Endothelial cell of umbilical vein (primary cell): ENCODE measurements at regions of chr18 and their contacts with region 1.

Region 1: DNA sequence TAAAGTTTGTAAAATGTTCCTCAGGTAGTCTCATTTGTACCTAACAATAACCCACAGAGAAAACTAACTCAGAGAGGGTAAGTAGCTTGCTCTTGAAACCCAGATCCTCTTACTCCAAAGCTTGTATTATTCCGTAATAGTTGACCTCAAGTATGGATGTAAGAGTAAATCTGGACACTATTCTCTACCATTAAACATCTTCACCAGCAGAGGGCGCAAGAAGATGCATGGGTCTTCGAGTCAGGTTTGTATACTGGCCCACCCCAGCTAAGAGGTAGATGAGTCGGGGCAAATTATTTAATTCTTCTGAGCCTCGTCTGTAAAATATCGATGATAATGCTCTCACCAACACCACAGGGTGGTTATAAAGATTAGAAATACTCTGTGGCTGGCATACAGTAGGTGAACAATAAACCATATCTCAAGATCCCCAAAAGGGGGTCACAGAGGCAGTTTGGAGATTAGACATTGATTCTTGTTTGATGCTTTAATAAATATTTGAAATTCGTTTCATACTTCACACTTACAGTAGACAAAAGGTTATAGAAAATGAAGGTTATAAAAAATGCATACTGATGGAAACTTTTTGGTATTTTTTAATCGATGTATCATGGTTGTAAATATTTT is 3.5 kb upstream of the CABLES1 start:
- DNase-seq: peak; percentile 81
- H3K4me3 ChIP-seq: no peak overlapping the region
- H3K27ac ChIP-seq: no peak overlapping the region
- H3K4me1 ChIP-seq: peaks cover 25% of the 10 kb centered on the region
- H3K27me3 ChIP-seq: no peaks in the 10 kb centered on the region
- CTCF ChIP-seq: peak; percentile 62 to 71
- POLR2A ChIP-seq: no peak

Region 2: DNA sequence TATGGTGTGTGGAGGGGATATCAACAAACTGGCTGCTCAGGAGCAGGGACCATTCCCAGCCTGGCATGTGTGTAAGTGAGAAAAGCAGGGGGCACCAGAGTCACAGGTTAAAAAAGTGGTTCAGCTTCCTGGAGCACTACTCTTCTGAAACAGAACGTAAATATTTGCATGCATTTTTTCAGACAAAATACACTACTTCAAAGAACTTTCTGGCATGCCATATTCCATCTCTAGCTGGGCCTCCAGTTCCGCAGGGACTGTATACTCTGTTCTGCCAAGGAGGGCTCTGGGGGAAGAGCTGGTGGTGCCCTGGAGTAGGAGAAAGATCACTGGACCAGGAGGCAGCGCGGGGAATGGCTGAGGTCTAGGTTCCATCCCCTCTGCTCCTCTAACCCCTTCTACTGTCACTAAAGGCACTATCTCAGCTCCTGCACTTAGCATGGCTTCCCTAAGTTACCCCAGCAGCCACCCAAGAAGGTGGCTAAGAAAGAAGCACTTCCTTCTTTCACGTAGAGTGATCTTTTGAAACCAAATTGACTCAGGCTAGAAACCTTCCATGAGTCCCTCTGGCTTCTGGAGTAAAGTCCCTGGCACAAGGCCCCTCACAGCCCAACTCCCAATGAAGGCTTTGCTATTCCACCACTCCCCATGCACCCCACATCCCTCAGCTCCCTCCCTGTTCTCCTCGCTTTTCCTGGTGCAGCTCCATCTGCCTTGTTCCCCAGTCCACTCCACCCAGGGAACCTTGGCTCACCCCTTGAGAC is 54.1 kb before region 1 on chr18:
- CTCF ChIA-PET with region 1: interaction called, 14 read pairs
- POLR2A ChIA-PET with region 1: no interaction called
- dilution Hi-C with region 1: no loop called
- intact Hi-C with region 1: loop called (anchors 2 kb)
- DNase-seq: peak; percentile 24
- H3K4me3 ChIP-seq: no peak overlapping the region
- H3K27ac ChIP-seq: no peak overlapping the region
- H3K4me1 ChIP-seq: peaks cover 4% of the 10 kb centered on the region
- H3K27me3 ChIP-seq: peaks cover 0 to 2% of the 10 kb centered on the region in 2 experiments
- CTCF ChIP-seq: peak; percentile 20 to 28
- POLR2A ChIP-seq: no peak

Region 3: GRCh38 chr18:23115683-23116096 is 16.1 kb before region 1 on chr18:
- CTCF ChIA-PET with region 1: interaction called, 28 read pairs
- POLR2A ChIA-PET with region 1: no interaction called
- dilution Hi-C with region 1: no loop called
- intact Hi-C with region 1: loop called (anchors 2 kb)
- DNase-seq: peak; percentile 91
- H3K4me3 ChIP-seq: no peak overlapping the region
- H3K27ac ChIP-seq: peak overlapping the region; percentile 80
- H3K4me1 ChIP-seq: peaks cover 25% of the 10 kb centered on the region
- H3K27me3 ChIP-seq: no peaks in the 10 kb centered on the region
- CTCF ChIP-seq: no peak
- POLR2A ChIP-seq: no peak

Region 4: GRCh38 chr18:23237524-23238151 is 105.8 kb after region 1 on chr18:
- CTCF ChIA-PET with region 1: interaction called, 10 read pairs
- POLR2A ChIA-PET with region 1: no interaction called
- dilution Hi-C with region 1: no loop called
- intact Hi-C with region 1: no loop called
- DNase-seq: peak; percentile 84
- H3K4me3 ChIP-seq: no peak overlapping the region
- H3K27ac ChIP-seq: peak overlapping the region; percentile 83
- H3K4me1 ChIP-seq: peaks cover 21% of the 10 kb centered on the region
- H3K27me3 ChIP-seq: no peaks in the 10 kb centered on the region
- CTCF ChIP-seq: peak; percentile 51 to 66
- POLR2A ChIP-seq: no peak

Region 5: DNA sequence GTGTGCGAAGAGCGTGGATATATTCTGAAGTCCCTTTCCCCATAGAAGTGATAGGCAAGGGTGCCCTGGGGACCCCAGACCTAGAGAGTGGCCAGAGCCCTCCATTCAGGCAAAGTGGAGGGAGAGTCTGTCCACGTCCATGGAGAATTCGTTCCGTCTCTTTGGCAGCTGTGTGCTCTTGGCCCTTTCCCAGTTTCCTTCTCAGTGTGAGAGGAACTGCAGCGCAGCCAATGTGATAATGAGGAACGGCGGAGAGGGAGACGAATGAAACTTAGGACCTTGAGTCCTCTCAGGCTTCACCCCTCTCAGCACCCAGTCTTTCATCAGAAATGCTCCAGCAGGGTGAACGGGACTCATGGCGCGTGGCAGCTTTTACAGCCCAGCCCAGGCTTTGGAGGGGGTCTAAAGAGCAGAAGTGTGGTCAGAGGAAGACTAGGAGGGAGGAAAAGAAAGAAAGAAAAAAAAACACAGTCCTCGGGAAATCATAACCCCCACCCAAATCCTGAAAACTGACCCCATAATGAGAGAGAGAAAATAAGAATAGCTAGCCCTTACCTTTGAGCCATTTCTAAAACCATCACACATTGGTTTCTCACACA is 226.3 kb after region 1 on chr18:
- CTCF ChIA-PET with region 1: interaction called, 7 read pairs
- POLR2A ChIA-PET with region 1: interaction called, 3 read pairs
- dilution Hi-C with region 1: no loop called
- intact Hi-C with region 1: loop called (anchors 1 kb)
- DNase-seq: peak; percentile 63
- H3K4me3 ChIP-seq: no peak overlapping the region
- H3K27ac ChIP-seq: no peak overlapping the region
- H3K4me1 ChIP-seq: peaks cover 10% of the 10 kb centered on the region
- H3K27me3 ChIP-seq: no peaks in the 10 kb centered on the region
- CTCF ChIP-seq: no peak
- POLR2A ChIP-seq: no peak

Region 6: GRCh38 chr18:23416298-23416697 is 284.5 kb after region 1 on chr18:
- CTCF ChIA-PET with region 1: interaction called, 92 read pairs
- POLR2A ChIA-PET with region 1: no interaction called
- dilution Hi-C with region 1: no loop called
- intact Hi-C with region 1: loop called (anchors 1 kb)
- DNase-seq: no peak
- H3K4me3 ChIP-seq: no peak overlapping the region
- H3K27ac ChIP-seq: no peak overlapping the region
- H3K4me1 ChIP-seq: no peaks in the 10 kb centered on the region
- H3K27me3 ChIP-seq: no peaks in the 10 kb centered on the region
- CTCF ChIP-seq: no peak
- POLR2A ChIP-seq: no peak